Activated naive CD4-positive, alpha-beta T cell treated with anti-CD3 and anti-CD28 coated beads for 36 hours (primary cell): ENCODE measurements at regions of chr2 and their contacts with region 1.

Region 1: GRCh38 chr2:152036611-152037469 is 62.0 kb downstream of the CACNB4 start:
- DNase-seq: peak; percentile 79
- H3K4me3 Mint-ChIP-seq: no peak overlapping the region
- H3K27ac Mint-ChIP-seq: no peak overlapping the region
- H3K4me1 Mint-ChIP-seq: no peaks in the 10 kb centered on the region
- H3K27me3 Mint-ChIP-seq: no peaks in the 10 kb centered on the region

Region 2: DNA sequence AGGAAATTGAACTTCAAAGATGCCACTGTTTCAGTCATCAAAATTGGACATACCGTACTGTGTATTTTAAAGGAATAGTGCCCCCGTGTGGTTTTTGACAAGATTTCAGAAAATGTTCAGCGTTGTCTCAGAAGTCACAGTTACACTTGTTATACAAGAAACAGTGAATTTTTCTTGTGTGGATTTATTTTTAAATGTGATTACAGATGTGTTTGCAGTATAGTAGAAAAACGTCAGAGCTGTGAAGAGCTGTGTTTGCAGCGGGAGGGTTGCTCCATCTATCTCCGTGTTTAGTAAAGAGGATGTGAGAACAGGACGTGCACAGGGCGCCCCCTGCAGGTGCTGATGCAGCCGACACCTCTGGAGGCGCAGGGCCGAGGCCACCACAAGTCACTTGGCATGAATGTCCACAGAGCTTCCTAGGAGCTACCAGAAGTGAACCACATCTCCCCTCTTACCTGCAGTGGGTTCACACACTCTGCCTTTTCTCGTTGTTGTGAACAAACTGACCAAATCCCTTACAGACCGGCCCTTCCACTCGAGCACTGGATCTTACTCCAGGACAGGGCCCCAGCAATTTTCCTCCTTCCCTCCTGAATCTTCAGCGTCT is 11.1 kb before region 1 on chr2:
- CTCF ChIA-PET with region 1: interaction called, 15 read pairs
- intact Hi-C with region 1: no loop called
- DNase-seq: peak; percentile 87
- H3K4me3 Mint-ChIP-seq: peak overlapping the region; percentile 73
- H3K27ac Mint-ChIP-seq: peak overlapping the region; percentile 63
- H3K4me1 Mint-ChIP-seq: peaks cover 4% of the 10 kb centered on the region
- H3K27me3 Mint-ChIP-seq: peaks cover 5% of the 10 kb centered on the region

Region 3: GRCh38 chr2:152161598-152161997 is 124.8 kb after region 1 on chr2:
- CTCF ChIA-PET with region 1: no interaction called
- intact Hi-C with region 1: no loop called
- DNase-seq: no peak
- H3K4me3 Mint-ChIP-seq: no peak overlapping the region
- H3K27ac Mint-ChIP-seq: no peak overlapping the region
- H3K4me1 Mint-ChIP-seq: peaks cover 16% of the 10 kb centered on the region
- H3K27me3 Mint-ChIP-seq: no peaks in the 10 kb centered on the region

Region 4: DNA sequence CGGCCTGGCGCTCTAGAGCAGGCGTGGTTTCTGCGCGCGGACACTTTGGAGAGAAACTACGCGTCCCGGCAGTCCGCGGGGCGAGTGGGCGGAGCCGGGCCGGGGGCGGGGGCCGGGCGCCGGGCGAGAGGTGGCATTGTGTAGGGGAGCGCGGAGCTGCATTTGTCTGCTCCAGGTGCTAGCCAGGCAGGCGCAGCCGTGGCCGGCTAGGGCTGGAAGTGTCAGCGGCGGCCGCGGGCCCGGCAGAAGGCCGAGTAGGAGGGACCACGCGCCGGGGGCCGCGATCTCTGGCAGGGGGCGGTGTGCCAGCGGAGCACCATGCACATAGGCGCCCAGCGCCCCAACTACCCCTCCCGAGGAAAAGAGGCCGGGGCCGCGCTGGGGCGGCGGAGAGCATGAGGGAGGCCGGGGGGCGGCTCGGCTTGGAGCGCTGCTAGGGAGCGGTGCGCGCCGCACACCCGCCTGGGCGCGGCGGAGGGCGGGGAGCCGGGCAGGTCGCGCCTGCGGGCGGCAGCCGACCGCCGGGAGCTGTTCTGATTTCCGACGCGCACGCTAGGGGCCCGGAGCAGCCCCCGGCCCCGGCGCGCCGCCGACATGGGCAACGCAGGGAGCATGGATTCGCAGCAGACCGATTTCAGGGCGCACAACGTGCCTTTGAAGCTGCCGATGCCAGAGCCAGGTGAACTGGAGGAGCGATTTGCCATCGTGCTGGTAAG is 298.3 kb after region 1 on chr2 and contains the start of gene FMNL2:
- CTCF ChIA-PET with region 1: no interaction called
- intact Hi-C with region 1: loop called (anchors 10 kb)
- DNase-seq: peak; percentile 64
- H3K4me3 Mint-ChIP-seq: peak within 1 kb of the TSS; percentile 80
- H3K27ac Mint-ChIP-seq: no peak within 1 kb of the TSS
- H3K4me1 Mint-ChIP-seq: peaks cover 8% of the 10 kb centered on the region
- H3K27me3 Mint-ChIP-seq: peaks cover 41% of the 10 kb centered on the region
- total RNA-seq, gene FMNL2: 2.5 to 2.7 TPM

Region 5: DNA sequence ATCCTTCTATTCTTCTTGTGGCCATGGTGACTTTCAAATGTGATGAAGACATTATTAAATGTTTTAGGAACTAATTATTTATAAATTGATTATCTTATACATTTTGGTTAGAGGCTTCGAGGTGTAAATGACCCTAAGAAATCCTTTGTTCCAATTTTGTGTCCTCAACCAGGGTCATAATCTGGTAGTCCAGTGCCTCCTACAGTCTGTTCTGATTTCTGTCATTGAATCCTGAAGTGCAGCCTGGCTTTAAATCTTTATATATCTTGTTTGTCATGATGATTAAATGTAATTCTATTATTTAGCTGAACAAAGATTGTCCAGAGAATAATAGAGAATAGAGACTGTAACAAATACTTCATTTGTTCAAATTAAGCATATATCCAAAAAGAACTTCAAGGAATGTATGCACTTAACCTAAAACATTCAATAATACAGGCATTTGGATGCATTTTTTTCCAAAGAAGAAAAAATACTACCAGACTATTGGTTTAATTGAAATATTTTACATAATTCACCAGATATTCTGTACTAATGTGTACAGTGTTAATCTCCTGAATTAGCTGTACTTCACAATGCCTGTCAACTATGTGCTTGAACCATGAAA is 590.6 kb after region 1 on chr2:
- CTCF ChIA-PET with region 1: no interaction called
- intact Hi-C with region 1: loop called (anchors 2 kb)
- DNase-seq: no peak
- H3K4me3 Mint-ChIP-seq: no peak overlapping the region
- H3K27ac Mint-ChIP-seq: no peak overlapping the region
- H3K4me1 Mint-ChIP-seq: peaks cover 4% of the 10 kb centered on the region
- H3K27me3 Mint-ChIP-seq: peaks cover 6% of the 10 kb centered on the region

Region 6: DNA sequence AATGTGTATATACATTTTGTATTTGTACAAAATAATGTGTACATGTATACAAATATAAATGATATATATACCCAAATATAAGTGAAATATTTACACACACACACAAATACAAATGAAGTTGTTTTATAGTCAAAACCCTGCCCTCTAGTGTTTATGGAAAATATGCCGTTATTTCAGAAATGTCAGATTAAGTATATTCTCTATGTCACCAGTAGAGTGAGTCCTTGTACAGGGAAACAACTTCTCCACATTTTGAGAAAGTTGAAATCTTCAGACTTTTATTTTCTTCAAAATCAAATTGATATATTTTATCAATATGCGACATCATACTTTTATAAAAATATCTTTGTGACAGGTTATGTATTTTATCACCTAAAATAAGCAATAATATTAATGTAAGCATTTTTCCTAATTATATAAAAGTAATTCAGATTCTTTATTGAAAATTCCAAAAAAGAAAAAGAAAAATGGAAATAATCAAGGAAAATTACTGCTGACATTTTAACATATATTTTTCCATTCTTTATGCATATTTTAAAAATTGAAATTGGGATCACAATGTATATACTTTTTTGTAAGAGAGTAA is 704.0 kb after region 1 on chr2:
- CTCF ChIA-PET with region 1: no interaction called
- intact Hi-C with region 1: loop called (anchors 1 kb)
- DNase-seq: no peak
- H3K4me3 Mint-ChIP-seq: no peak overlapping the region
- H3K27ac Mint-ChIP-seq: no peak overlapping the region
- H3K4me1 Mint-ChIP-seq: no peaks in the 10 kb centered on the region
- H3K27me3 Mint-ChIP-seq: no peaks in the 10 kb centered on the region